HEK293T (cell line): ENCODE measurements at regions of chr1 and their contacts with region 1.

Region 1: GRCh38 chr1:230905733-230906132 is 37.4 kb upstream of the C1orf198 start:
- DNase-seq: no peak

Region 2: DNA sequence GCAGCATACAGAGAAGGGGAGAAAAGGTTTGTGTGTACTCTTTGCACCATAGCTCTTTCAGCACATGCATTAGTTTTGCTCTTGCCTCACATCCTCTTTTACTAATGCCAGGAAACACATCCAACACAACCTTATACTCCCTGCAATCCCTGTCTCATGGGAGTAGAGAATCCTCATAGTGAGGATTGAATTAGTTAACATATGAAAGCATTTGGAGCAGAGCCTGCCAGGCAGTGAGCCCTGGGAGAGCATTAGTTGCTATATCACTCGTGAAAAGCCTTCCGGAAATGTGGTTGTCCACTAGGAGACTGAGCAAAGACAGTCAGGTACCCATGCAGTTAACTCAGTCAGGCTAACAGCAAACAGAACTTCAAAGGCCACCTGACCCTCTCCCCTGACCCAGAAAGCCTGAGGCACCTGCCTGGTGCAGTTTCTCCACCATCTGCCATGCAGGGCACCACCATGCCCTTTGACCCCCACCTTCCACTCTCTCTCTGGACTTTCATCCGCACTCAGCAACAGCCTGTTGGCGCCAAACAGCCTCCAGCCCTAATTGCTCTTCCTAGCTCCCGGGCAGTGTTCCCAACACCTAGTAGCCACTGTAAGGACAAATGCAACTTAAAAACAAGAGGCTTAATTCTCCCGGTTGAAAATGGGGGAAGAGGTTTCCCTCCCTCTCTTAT is 176.9 kb before region 1 on chr1:
- CTCF ChIA-PET with region 1: no interaction called
- POLR2A ChIA-PET with region 1: no interaction called
- DNase-seq: no peak

Region 3: DNA sequence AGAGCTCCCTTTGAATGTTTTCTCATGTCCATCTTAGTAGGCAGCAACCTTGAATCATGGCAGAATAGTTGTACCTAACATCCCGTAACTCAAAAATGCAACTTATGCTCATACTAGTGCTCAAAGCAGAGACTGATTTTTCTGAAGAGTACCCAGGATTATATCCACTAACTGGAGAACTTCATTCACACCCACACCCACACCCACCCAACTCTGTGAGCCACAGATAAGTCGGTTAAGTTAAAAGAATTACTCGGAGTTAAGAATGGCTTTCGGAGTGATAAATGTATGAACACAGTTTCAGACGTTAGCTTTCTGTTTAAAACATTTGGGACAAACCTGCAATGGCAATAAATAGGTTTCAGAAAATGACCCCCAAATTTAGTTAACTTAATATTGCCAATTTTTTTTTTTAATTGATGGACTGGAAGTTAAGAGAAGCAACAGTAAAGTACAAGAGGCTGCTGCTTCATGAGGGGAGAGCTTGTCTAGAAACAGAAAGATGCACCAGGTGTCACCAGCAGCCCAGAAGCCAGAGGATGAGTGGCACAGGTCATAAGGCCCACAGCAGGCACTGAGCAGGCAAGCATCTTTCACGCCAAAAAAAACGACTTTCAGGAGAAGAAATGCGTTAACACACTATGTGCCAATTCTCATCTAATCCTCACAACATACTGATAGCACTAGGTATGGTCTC is 11.0 kb after region 1 on chr1:
- CTCF ChIA-PET with region 1: interaction called, 11 read pairs
- POLR2A ChIA-PET with region 1: no interaction called
- DNase-seq: no peak

Region 4: DNA sequence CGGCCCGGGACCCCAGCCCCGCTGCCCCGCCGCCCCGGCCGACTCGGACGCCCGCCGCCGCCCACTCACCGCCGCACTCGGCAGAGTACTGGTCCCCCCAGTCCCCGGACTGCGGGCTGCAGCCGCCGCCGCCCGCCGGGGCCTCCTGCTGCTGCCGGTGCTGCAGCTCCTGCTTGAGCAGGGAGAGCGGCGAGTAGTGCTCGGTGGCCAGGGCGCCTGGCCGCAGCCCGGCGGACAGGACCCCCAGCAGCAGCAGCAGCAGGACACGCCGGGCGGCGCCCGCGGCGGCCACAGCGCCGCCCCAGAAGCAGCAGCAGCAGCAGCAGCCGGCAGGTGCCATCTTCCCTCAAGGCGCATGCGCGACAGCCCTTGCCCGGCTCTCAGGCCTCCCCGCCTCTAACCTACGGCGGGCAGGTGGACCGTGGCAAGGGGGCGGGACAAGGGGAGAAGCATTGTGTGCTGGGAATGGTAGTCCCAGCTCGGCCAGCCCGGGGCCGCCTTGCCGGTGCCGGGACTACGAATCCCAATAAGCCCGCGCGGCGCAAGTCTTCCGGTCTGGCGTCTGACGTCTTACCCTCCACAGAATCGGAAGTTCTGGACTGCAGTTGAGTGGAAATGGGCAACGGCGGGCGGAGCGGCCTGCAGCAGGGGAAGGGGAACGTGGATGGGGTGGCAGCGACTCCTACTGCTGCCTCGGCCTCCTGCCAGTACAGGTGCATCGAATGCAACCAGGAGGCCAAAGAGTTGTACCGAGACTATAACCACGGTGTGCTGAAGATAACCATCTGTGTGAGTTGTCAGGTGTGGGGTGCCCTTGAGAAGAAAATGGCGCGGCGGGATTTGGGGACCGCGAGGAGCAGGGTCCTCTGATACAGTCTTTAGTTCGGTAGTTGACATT is 73.0 kb after region 1 on chr1 and contains the starts of genes ARV1 and TTC13:
- CTCF ChIA-PET with region 1: no interaction called
- POLR2A ChIA-PET with region 1: no interaction called
- DNase-seq: peak; percentile 100